B cell (primary cell): ENCODE measurements at regions of chr5 and their contacts with region 1.

Region 1: GRCh38 chr5:125006011-125006685 is 259.7 kb upstream of the ZNF608 start:
- DNase-seq: peak; percentile 80
- ATAC-seq: peak; percentile 67
- H3K4me3 ChIP-seq: peak overlapping the region in 3 of 5 experiments; percentile 18 to 46 (median 33)
- H3K4me3 Mint-ChIP-seq: peak overlapping the region; percentile 48
- H3K27ac ChIP-seq: peak overlapping the region; percentile 86 to 88
- H3K27ac Mint-ChIP-seq: peak overlapping the region; percentile 57
- H3K4me1 ChIP-seq: peaks cover 38 to 40% of the 10 kb centered on the region in 2 donors
- H3K4me1 Mint-ChIP-seq: peaks cover 57% of the 10 kb centered on the region
- H3K27me3 ChIP-seq: no peaks in the 10 kb centered on the region
- H3K27me3 Mint-ChIP-seq: no peaks in the 10 kb centered on the region
- CTCF ChIP-seq: no peak

Region 2: DNA sequence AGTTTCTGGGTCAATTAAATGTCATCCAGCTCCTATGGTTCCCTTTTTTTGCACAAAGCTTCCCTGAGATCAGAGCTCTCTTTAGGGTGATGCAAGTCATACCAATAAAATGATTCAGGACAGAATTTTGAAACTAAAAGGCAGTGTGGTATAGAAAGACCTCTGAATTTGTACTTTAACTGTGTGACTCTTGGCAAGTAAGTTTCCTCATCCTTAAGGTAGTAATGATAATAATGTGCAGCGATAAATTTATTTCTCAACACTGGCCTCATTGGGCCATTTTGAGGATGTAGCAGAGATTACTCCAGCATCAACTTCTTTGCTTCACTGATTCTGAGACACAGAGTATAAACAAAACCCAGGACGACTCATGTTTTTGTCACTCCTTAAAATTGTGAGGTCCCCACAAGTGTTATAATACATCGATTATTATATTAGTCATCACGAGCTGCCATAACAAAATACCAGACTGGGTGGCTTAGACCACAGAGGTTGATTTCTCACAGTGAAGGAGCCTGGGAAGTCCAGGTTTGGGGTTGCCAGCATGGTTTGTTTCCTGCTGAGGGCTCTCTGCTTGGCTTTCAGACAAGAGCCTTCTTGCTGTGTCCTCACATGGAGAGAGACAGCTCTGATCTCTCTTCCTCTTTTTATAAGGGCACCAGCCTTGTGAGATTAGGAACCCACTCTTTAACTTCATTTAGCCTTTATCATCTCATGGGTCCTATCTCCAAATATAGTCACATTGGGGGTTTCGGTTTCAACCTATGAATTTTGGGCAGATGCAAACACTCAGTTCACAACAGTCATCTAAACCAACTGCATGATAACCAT is 552.7 kb before region 1 on chr5:
- CTCF ChIA-PET with region 1: no interaction called
- POLR2A ChIA-PET with region 1: no interaction called
- intact Hi-C with region 1: loop called (anchors 5 kb)
- DNase-seq: peak; percentile 73
- ATAC-seq: peak; percentile 95
- H3K4me3 ChIP-seq: no peak overlapping the region
- H3K4me3 Mint-ChIP-seq: peak overlapping the region; percentile 80
- H3K27ac ChIP-seq: peak overlapping the region in 1 of 2 donors; percentile 22
- H3K27ac Mint-ChIP-seq: peak overlapping the region; percentile 83
- H3K4me1 ChIP-seq: peaks cover 28 to 29% of the 10 kb centered on the region in 2 donors
- H3K4me1 Mint-ChIP-seq: peaks cover 32% of the 10 kb centered on the region
- H3K27me3 ChIP-seq: no peaks in the 10 kb centered on the region
- H3K27me3 Mint-ChIP-seq: no peaks in the 10 kb centered on the region
- CTCF ChIP-seq: no peak

Region 3: GRCh38 chr5:124649491-124650146 is 356.5 kb before region 1 on chr5:
- CTCF ChIA-PET with region 1: no interaction called
- POLR2A ChIA-PET with region 1: no interaction called
- intact Hi-C with region 1: loop called (anchors 1 kb)
- DNase-seq: peak; percentile 96
- ATAC-seq: peak; percentile 74
- H3K4me3 ChIP-seq: peak overlapping the region; percentile 1 to 54 (median 25)
- H3K4me3 Mint-ChIP-seq: peak overlapping the region; percentile 38
- H3K27ac ChIP-seq: peak overlapping the region; percentile 76 to 84
- H3K27ac Mint-ChIP-seq: peak overlapping the region; percentile 88
- H3K4me1 ChIP-seq: peaks cover 70 to 88% of the 10 kb centered on the region in 2 donors
- H3K4me1 Mint-ChIP-seq: peaks cover 84% of the 10 kb centered on the region
- H3K27me3 ChIP-seq: peaks cover 0 to 24% (median 0%) of the 10 kb centered on the region in 4 experiments
- H3K27me3 Mint-ChIP-seq: no peaks in the 10 kb centered on the region
- CTCF ChIP-seq: no peak

Region 4: DNA sequence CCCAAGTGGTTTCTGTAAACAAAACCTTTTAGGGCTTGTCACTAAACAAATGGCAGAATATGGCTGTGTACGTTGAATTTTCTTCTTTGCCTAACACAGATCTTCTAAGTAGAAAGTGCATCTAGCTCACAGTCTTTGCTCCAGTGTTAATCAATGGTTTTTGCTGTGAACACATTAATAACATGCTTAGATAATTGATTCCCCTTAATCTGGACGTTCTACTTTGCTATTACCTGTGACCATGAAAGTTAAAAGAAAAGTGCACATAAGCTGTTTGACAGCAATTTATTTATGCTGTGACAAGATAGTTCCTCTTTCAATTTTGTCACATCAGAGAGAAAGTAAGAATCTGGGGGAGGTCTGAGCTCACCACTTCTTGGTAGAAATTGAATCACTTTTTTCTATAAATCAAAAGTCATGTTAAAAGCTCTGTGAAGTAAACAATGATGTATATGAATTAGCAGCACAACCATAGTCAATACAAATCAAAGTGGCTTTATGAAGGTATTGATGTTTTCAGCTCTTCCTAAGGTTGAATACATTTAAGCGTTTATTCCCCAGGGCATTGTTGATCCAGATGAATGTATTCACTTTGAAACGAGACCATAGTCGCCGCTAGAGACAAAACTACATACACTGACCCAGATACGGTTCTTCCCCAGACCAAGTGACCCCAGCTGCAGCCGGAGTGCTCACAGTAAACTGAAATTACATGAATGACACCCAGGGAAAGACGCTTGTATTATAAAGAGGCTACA is 85.1 kb before region 1 on chr5:
- CTCF ChIA-PET with region 1: interaction called, 4 read pairs
- POLR2A ChIA-PET with region 1: no interaction called
- intact Hi-C with region 1: loop called (anchors 5 kb)
- DNase-seq: peak; percentile 77
- ATAC-seq: peak; percentile 80
- H3K4me3 ChIP-seq: peak overlapping the region; percentile 2 to 61 (median 36)
- H3K4me3 Mint-ChIP-seq: no peak overlapping the region
- H3K27ac ChIP-seq: peak overlapping the region; percentile 54 to 71
- H3K27ac Mint-ChIP-seq: no peak overlapping the region
- H3K4me1 ChIP-seq: peaks cover 29 to 30% of the 10 kb centered on the region in 2 donors
- H3K4me1 Mint-ChIP-seq: peaks cover 27% of the 10 kb centered on the region
- H3K27me3 ChIP-seq: no peaks in the 10 kb centered on the region
- H3K27me3 Mint-ChIP-seq: no peaks in the 10 kb centered on the region
- CTCF ChIP-seq: no peak

Region 5: DNA sequence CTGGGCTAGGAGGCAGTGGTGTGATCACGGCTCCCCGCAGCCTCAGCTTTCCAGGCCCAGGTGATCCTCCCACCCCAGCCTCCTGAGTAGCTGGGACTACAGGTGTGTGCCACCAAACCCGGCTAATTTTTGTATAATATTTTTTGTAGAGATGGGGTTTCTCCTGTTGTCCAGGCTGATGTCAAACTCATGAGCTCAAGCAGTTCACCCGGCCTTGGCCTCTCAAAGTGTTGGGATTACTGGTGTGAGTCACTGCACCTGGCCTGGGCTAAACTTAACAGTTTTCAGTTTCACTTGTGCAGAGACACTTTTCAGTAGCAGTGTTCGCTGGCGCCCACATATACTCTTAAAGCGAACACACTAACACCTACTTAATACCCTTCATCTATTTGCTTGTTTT is 54.1 kb before region 1 on chr5:
- CTCF ChIA-PET with region 1: no interaction called
- POLR2A ChIA-PET with region 1: no interaction called
- intact Hi-C with region 1: loop called (anchors 5 kb)
- DNase-seq: peak; percentile 48
- ATAC-seq: peak; percentile 74
- H3K4me3 ChIP-seq: peak overlapping the region in 3 of 5 experiments; percentile 1 to 27 (median 21)
- H3K4me3 Mint-ChIP-seq: peak overlapping the region; percentile 50
- H3K27ac ChIP-seq: peak overlapping the region; percentile 64 to 84
- H3K27ac Mint-ChIP-seq: peak overlapping the region; percentile 85
- H3K4me1 ChIP-seq: peaks cover 12 to 23% of the 10 kb centered on the region in 2 donors
- H3K4me1 Mint-ChIP-seq: peaks cover 13% of the 10 kb centered on the region
- H3K27me3 ChIP-seq: no peaks in the 10 kb centered on the region
- H3K27me3 Mint-ChIP-seq: no peaks in the 10 kb centered on the region
- CTCF ChIP-seq: no peak

Region 6: GRCh38 chr5:125140855-125141254 is 134.7 kb after region 1 on chr5:
- CTCF ChIA-PET with region 1: no interaction called
- POLR2A ChIA-PET with region 1: interaction called, 17 read pairs
- intact Hi-C with region 1: no loop called
- DNase-seq: no peak
- ATAC-seq: no peak
- H3K4me3 ChIP-seq: no peak overlapping the region
- H3K4me3 Mint-ChIP-seq: no peak overlapping the region
- H3K27ac ChIP-seq: no peak overlapping the region
- H3K27ac Mint-ChIP-seq: no peak overlapping the region
- H3K4me1 ChIP-seq: peaks cover 3 to 15% of the 10 kb centered on the region in 2 donors
- H3K4me1 Mint-ChIP-seq: peaks cover 12% of the 10 kb centered on the region
- H3K27me3 ChIP-seq: no peaks in the 10 kb centered on the region
- H3K27me3 Mint-ChIP-seq: no peaks in the 10 kb centered on the region
- CTCF ChIP-seq: no peak